ENCODE measurements at regions of chr22 and their contacts with region 1.

Region 1: GRCh38 chr22:45553351-45554039 is 50.8 kb downstream of the FBLN1 start:
- DNase-seq: peak in 3 of 4 donors; percentile 71 to 88 (median 83)
- ATAC-seq: peak; percentile 80
- H3K4me3 ChIP-seq: no peak overlapping the region
- H3K27ac ChIP-seq: peak overlapping the region; percentile 26 to 51
- H3K4me1 ChIP-seq: peaks cover 10 to 15% of the 10 kb centered on the region in 2 donors
- H3K27me3 ChIP-seq: peaks cover 0 to 46% of the 10 kb centered on the region in 2 donors
- CTCF ChIP-seq: peak; percentile 68 to 85

Region 2: DNA sequence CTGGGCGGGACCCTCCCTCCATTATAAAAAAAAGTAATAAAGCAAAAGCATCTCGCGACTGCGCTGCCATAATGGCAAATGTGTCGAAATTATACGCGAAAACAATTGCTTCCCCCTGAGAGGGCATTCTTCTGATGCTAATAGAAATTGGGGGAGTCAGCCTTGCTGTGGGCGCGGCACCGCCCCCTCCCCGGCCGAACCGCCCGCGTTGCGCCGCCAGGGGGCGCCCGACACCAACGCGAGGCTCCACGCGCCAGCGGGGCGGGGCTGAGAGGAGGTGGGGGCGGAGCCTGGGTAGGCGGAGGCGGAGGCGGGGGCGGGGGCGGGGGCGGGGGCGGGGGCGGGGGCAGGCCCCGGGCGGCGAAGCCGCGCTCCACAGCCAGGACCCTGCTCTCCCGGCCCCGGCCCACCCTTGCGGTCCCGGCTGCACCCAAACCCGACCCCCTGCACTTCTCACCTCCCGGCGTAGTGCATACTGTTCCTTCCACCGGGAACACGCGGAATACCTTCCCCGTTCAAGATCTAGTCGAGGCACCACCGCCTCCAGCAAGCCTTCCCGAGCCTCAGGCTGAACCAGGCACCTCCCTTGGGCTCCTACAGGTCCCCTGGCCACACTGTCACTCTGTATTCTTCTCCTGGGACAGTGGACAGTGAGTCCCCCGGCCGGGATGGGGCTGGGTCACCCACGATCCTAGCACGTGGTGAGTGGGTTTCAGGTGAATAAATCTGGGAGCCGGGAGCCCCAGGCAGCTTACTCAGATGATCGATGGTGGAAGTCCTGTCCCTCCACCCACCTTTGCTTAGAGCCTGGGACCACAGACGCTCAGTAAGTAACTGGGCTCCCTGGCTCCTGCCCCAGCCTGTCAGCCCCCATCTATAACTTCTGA is 284.3 kb before region 1 on chr22:
- intact Hi-C with region 1: loop called in 1 of 2 experiments (anchors 10 kb)
- DNase-seq: peak; percentile 86 to 97 (median 90)
- ATAC-seq: peak; percentile 98
- H3K4me3 ChIP-seq: peak overlapping the region; percentile 42 to 48
- H3K27ac ChIP-seq: no peak overlapping the region
- H3K4me1 ChIP-seq: peaks cover 3 to 16% of the 10 kb centered on the region in 2 donors
- H3K27me3 ChIP-seq: peaks cover 0 to 27% of the 10 kb centered on the region in 2 donors
- CTCF ChIP-seq: peak; percentile 93 to 95

Region 3: GRCh38 chr22:45441138-45441537 is 112.4 kb before region 1 on chr22:
- intact Hi-C with region 1: loop called in 1 of 2 experiments (anchors 5 kb)
- DNase-seq: peak in 2 of 4 donors; percentile 30 to 75
- ATAC-seq: peak; percentile 93
- H3K4me3 ChIP-seq: no peak overlapping the region
- H3K27ac ChIP-seq: no peak overlapping the region
- H3K4me1 ChIP-seq: peaks cover 0 to under 1% of the 10 kb centered on the region in 2 donors
- H3K27me3 ChIP-seq: peaks cover 0 to 15% of the 10 kb centered on the region in 2 donors
- CTCF ChIP-seq: peak; percentile 40 to 43

Region 4: GRCh38 chr22:45678961-45679912 is 125.7 kb after region 1 on chr22:
- intact Hi-C with region 1: no loop called
- DNase-seq: no peak
- ATAC-seq: no peak
- H3K4me3 ChIP-seq: no peak overlapping the region
- H3K27ac ChIP-seq: no peak overlapping the region
- H3K4me1 ChIP-seq: peaks cover 12 to 36% of the 10 kb centered on the region in 2 donors
- H3K27me3 ChIP-seq: no peaks in the 10 kb centered on the region
- CTCF ChIP-seq: no peak

Measured in left lung (tissue), 14 donors.